Aorta (tissue), 5 donors: ENCODE measurements at regions of chr7 and their contacts with region 1.

Region 1: GRCh38 chr7:66075590-66076461 is at the start of gene ASL:
- DNase-seq: peak; percentile 95 to 97
- ATAC-seq: peak; percentile 99
- H3K4me3 ChIP-seq: peak within 1 kb of the TSS; percentile 59 to 87
- H3K27ac ChIP-seq: no peak within 1 kb of the TSS
- H3K4me1 ChIP-seq: no peaks in the 10 kb centered on the region
- H3K27me3 ChIP-seq: no peaks in the 10 kb centered on the region
- total RNA-seq, gene ASL: 29.1 to 30.3 TPM

Region 2: GRCh38 chr7:66114793-66115649 is 39.2 kb after region 1 on chr7 and contains the start of gene CRCP:
- intact Hi-C with region 1: loop called (anchors 2 to 5 kb)
- DNase-seq: peak; percentile 89 to 95
- ATAC-seq: peak; percentile 95
- H3K4me3 ChIP-seq: peak within 1 kb of the TSS; percentile 65 to 73
- H3K27ac ChIP-seq: peak within 1 kb of the TSS; percentile 31 to 90
- H3K4me1 ChIP-seq: no peaks in the 10 kb centered on the region
- H3K27me3 ChIP-seq: no peaks in the 10 kb centered on the region
- total RNA-seq, gene CRCP: 27.1 to 29.5 TPM